ENCODE measurements at regions of chr17 and their contacts with region 1.

Region 1: DNA sequence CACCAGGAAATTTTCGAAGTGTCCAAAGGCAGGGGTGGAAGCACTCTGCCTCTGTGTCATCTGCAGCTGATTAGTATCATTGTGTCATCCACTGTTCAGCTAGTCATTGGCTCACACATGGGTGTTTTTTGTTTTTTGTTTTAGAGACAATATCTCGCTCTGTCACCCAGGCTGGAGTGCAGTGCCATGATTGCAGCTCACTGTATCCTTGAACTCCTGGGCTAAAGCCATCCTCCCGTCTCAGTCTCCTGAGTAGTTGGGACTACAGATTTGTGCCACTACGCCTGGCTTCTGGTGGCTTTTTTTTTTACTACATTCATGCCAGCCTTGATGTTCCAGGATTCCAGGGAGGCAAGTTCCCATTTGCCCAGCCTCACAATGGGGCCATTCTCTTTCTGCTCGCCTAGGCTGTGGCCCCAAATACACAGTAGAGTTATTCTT is 32.5 kb upstream of the MYO18A start:
- DNase-seq: peak in 9 of 10 donors; percentile 42 to 91 (median 74)
- H3K4me3 ChIP-seq: peak overlapping the region in 35 of 59 donors; percentile 14 to 65 (median 30)
- H3K27ac ChIP-seq: peak overlapping the region; percentile 35 to 99 (median 94)
- H3K27me3 ChIP-seq: no peaks in the 10 kb centered on the region
- CTCF ChIP-seq: peak in 12 of 56 donors; percentile 3 to 41 (median 20)

Region 2: DNA sequence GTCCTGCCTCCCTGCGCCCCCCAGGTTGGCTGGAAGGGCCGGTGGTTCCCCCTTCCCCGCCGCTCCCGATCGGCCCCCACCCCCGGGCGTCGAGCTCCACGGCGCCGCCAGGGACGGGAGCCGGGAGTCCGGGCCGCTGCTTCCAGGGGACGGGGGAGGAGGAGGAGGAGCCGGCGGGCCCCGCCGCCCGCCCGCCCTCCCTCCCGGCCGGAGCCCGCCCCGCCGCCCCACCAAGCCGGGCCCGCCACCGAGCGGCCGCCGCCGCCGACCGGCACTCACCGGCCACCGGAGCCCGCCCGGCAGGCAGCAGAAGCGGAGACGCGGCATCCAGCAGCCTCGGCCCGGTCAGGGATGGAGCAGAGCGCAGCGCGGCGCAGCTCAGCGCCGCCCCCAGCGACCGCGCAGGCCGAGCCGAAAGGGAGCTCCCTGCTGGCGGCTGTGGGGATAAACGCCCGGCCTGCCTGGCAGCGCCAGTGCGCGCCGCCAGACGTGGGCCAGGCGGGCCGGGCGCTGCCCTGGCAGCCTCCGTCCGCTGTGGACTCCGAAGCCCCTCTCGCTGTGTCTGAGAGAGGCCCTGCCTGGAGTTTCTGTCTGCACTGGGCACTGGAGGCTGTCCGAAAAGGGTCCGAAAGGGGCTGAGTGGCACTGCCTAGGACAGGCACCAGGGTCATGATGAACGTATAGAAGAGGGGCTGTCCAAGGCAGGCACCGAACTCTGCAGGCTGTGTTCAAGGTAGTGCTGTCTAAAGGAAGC is 32.5 kb before region 1 on chr17 and contains the start of gene MYO18A:
- intact Hi-C with region 1: loop called in 1 of 2 experiments (anchors 2 kb)
- DNase-seq: peak; percentile 55 to 89 (median 74)
- H3K4me3 ChIP-seq: peak within 1 kb of the TSS; percentile 55 to 91 (median 78)
- H3K27ac ChIP-seq: peak within 1 kb of the TSS; percentile 85 to 100 (median 98)
- H3K27me3 ChIP-seq: no peaks in the 10 kb centered on the region
- CTCF ChIP-seq: peak; percentile 37 to 94 (median 76)
- total RNA-seq, gene MYO18A: 93.9 to 275 (median 143) TPM

Measured in dorsolateral prefrontal cortex (tissue), 120 donors.